ENCODE measurements at regions of chr4 and their contacts with region 1.

Region 1: GRCh38 chr4:8308856-8309771 is 39.6 kb downstream of the HTRA3 start:
- DNase-seq: peak; percentile 73 to 87
- ATAC-seq: peak; percentile 77 to 84
- H3K4me3 ChIP-seq: peak overlapping the region; percentile 3 to 40 (median 26)
- H3K27ac ChIP-seq: peak overlapping the region; percentile 65 to 72 (median 70)
- H3K4me1 ChIP-seq: peaks cover 17 to 35% of the 10 kb centered on the region in 2 donors
- H3K27me3 ChIP-seq: no peaks in the 10 kb centered on the region
- CTCF ChIP-seq: peak; percentile 33 to 77 (median 56)
- POLR2A ChIP-seq: peak; percentile 26 to 31

Region 2: DNA sequence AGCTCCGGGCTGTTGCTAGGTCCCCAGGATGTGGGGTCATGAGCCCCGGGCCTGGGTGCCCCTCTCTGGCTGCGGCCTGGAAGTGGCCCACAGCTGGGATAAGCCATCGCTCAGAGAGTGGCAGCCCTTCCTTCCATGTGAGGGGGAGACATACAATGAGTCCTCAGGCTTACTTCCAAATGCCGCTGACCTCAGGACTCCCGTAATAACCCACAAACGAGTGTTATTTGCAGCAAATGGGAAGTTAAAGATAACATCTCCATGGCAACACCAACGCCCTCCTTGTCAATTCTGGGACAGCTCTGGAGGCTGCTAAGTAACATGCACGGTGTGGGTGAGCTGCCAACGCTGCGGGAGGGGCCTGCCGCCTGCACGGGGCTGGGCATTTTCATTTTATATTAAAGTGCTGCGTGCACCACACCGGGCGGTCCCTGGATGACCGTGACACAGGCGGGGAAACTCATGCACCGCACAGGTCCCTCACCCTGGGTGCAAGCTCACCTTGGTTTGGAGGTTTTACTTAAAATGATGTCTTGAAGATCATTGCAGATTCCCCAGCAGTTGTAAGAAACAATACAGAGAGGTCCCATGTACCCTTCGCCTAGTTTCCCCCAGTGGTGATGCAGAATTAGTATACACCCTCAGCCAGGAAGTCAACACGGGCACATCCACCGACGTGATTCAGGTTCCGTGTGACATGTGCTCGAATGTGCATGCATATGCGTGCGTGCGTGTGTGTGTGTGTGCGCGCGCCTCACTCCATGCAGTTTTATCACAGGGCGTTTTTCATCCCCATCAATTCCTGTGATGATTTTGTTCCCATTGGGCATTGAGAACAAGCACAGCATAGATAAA is 229.9 kb before region 1 on chr4:
- in situ Hi-C with region 1: no loop called
- intact Hi-C with region 1: no loop called
- DNase-seq: no peak
- ATAC-seq: no peak
- H3K4me3 ChIP-seq: no peak overlapping the region
- H3K27ac ChIP-seq: peak overlapping the region in 3 of 4 donors; percentile 31 to 74 (median 68)
- H3K4me1 ChIP-seq: peaks cover 0 to 5% of the 10 kb centered on the region in 2 donors
- H3K27me3 ChIP-seq: no peaks in the 10 kb centered on the region
- CTCF ChIP-seq: no peak
- POLR2A ChIP-seq: no peak

Region 3: DNA sequence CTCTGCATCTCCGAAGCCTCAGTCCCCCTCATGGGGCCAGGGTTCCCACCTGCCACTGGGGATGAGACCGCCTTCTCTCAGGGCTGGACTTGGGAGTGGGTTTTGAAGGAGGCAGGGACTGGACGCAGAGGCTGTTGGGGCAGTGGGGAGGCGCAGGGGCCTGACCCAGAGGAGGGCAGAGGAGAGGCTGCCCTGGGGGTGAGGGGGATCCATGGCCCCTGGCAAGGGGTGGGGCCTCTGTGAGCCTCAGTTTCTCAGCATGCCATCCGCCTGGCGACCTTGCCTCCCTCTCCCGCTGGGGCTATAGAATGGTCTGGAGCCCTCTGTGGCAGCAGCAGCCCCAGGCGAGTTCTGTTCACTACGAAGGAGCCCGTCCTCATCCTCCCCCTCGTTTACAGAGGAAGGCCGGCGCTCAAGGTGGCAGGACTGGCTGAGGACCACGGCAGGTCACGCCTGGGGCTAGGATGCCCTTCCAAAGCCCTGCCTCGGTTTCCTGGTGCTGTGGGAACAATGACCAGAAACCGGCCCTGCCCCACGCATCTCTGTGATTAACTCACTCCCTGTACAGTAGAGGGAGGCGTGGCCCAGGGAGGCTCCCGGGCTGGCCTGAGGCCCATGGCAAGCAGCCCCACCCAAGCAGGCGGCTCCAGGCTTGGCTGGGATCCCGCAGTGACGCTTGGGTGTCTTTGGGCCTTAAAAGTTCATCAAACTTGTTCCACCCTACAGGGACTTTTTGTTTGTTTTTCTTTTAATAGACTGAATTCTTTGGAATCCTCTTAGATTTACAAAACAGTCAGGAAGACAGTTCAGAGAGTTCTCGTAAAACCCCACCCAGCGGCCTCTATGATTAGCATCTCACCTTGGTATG is 126.0 kb before region 1 on chr4:
- in situ Hi-C with region 1: no loop called
- intact Hi-C with region 1: no loop called
- DNase-seq: peak; percentile 62 to 77
- ATAC-seq: peak; percentile 52 to 56
- H3K4me3 ChIP-seq: no peak overlapping the region
- H3K27ac ChIP-seq: peak overlapping the region in 3 of 4 donors; percentile 6 to 33 (median 33)
- H3K4me1 ChIP-seq: peaks cover 19 to 24% of the 10 kb centered on the region in 2 donors
- H3K27me3 ChIP-seq: no peaks in the 10 kb centered on the region
- CTCF ChIP-seq: no peak
- POLR2A ChIP-seq: no peak

Region 4: GRCh38 chr4:8274765-8275547 is 34.2 kb before region 1 on chr4:
- in situ Hi-C with region 1: no loop called
- intact Hi-C with region 1: loop called (anchors 2 kb)
- DNase-seq: peak; percentile 69 to 90
- ATAC-seq: peak; percentile 69 to 81
- H3K4me3 ChIP-seq: no peak overlapping the region
- H3K27ac ChIP-seq: peak overlapping the region; percentile 40 to 65 (median 42)
- H3K4me1 ChIP-seq: peaks cover 29 to 43% of the 10 kb centered on the region in 2 donors
- H3K27me3 ChIP-seq: no peaks in the 10 kb centered on the region
- CTCF ChIP-seq: peak in 4 of 5 experiments; percentile 21 to 59 (median 48)
- POLR2A ChIP-seq: no peak

Region 5: DNA sequence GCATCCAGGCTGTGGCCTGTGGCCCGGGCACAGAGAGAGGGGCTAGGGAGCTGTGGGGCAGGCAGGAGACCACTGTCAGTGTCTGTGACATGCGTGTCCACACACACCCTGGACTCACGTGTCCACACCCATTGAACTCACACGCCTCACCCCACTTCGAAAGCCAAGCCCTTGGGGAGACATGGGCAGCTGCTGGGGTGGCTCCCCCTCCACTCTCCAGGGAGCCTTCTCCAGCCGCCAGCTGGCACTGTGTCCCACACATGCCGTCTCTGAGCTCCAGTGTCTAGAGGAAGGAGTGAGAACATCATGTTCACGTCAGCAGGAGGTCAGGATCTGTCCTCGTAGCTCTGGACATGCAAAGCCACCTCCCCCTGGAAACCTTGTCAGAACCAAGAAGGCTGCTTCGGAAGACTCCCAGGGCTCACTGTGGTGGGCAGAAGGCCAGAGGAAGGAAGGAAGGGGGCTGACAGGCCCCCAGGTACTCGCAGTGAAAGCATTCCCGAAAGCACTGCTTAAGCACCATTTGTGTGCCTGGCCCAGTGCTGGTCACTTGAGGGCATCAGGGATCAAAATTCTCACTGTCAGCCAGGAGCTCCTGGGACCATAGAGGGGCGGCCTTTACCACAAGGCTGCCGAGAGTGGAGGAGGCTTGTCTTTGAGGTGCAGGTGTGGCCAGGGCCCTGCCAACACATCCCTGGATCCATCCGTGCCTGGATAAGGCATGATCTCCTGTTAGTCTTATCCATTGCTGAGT is 21.9 kb after region 1 on chr4:
- in situ Hi-C with region 1: no loop called
- intact Hi-C with region 1: loop called (anchors 2 kb)
- DNase-seq: peak; percentile 82 to 93
- ATAC-seq: peak; percentile 88 to 91
- H3K4me3 ChIP-seq: no peak overlapping the region
- H3K27ac ChIP-seq: peak overlapping the region; percentile 59 to 92 (median 78)
- H3K4me1 ChIP-seq: peaks cover 23 to 25% of the 10 kb centered on the region in 2 donors
- H3K27me3 ChIP-seq: no peaks in the 10 kb centered on the region
- CTCF ChIP-seq: peak in 1 of 5 experiments; percentile 10
- POLR2A ChIP-seq: peak in 1 of 2 donors; percentile 26

Region 6: GRCh38 chr4:8340781-8341241 is 31.7 kb after region 1 on chr4:
- in situ Hi-C with region 1: no loop called
- intact Hi-C with region 1: loop called (anchors 2 kb)
- DNase-seq: peak; percentile 72 to 85
- ATAC-seq: peak; percentile 82 to 87
- H3K4me3 ChIP-seq: no peak overlapping the region
- H3K27ac ChIP-seq: peak overlapping the region; percentile 60 to 79 (median 76)
- H3K4me1 ChIP-seq: peaks cover 20 to 23% of the 10 kb centered on the region in 2 donors
- H3K27me3 ChIP-seq: no peaks in the 10 kb centered on the region
- CTCF ChIP-seq: no peak
- POLR2A ChIP-seq: no peak

Region 7: GRCh38 chr4:8391972-8392371 is 82.9 kb after region 1 on chr4:
- in situ Hi-C with region 1: no loop called
- intact Hi-C with region 1: loop called (anchors 1 kb)
- DNase-seq: peak; percentile 80 to 87
- ATAC-seq: peak; percentile 86 to 88
- H3K4me3 ChIP-seq: no peak overlapping the region
- H3K27ac ChIP-seq: peak overlapping the region; percentile 78 to 87 (median 79)
- H3K4me1 ChIP-seq: peaks cover 42 to 48% of the 10 kb centered on the region in 2 donors
- H3K27me3 ChIP-seq: no peaks in the 10 kb centered on the region
- CTCF ChIP-seq: no peak
- POLR2A ChIP-seq: peak in 1 of 2 donors; percentile 26

Region 8: DNA sequence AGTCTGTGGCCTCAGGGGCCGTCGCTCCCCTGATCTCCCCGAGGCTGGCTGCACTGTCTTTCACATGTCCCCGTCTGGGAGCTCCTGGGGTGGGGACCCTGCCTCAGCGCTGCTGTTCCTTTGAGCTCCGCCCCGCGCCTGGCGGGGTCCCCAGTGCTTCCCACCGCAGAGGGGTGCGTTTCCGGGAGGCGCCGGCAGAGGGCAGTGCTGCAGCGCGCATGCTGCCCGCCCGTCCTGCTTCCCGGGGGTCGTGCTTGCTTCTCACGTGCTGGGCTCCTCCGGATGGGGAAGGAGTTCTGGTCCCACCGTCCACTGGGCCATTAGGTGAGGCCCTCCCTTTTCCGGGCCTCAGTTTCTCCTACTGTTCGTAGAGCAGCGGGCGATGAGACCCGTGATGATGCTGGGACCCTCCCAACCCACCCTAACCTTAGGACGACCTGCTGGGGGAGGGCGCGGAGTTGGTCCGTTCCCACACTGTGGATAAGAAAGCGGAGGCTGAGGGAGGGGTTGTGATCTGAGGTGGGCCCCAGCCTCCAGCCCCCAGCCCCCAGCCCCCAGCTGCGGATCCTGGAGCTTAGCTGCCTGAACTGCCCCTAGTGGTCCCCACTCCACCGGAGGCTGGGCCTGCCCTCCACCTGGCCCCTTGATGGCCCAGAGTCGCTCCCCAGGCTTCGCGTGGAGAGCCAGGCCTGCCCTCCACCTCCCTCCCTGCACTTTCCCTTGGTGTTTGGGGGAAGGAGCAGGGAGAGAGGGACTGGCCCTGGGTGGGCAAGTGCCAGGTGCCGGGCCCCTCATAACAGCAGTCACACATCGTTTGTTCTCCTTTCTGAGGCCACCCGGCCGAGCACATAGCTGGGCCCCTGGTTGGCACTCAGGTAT is 298.7 kb after region 1 on chr4:
- in situ Hi-C with region 1: no loop called
- intact Hi-C with region 1: no loop called
- DNase-seq: no peak
- ATAC-seq: no peak
- H3K4me3 ChIP-seq: no peak overlapping the region
- H3K27ac ChIP-seq: no peak overlapping the region
- H3K4me1 ChIP-seq: no peaks in the 10 kb centered on the region
- H3K27me3 ChIP-seq: no peaks in the 10 kb centered on the region
- CTCF ChIP-seq: peak; percentile 58 to 88 (median 75)
- POLR2A ChIP-seq: no peak